HEK293 (cell line): ENCODE measurements at regions of chr5 and their contacts with region 1.

Region 1: DNA sequence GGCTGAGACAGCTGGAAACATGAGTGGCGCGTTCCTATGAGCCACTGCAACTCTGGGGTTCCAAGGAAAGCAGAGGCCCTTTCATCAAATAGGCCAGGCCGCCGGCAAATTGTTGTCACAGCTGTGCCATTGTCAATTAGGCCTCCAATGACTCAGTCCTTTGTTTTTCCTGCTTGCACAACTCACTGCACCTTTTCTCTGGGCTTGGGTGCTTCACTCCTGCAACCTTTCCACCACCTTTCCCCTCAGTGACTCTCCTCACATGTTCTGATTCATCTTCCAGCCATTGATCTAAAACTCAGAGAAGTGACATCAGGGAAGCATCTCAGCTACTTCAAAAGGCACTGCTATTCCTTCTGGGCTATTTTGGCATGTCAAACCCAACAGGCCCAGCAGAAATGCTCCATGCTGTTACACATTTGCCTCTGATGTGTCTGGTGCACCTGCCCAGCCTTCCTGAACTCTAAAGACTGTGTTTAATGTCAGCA is 653.7 kb downstream of the NR2F1-AS1 start:
- H3K4me3 ChIP-seq: no peak overlapping the region
- H3K27ac ChIP-seq: no peak overlapping the region
- H3K4me1 ChIP-seq: no peaks in the 10 kb centered on the region
- CTCF ChIP-seq: no peak

Region 2: GRCh38 chr5:92588876-92589275 is 338.5 kb before region 1 on chr5:
- CTCF ChIA-PET with region 1: no interaction called
- POLR2A ChIA-PET with region 1: no interaction called
- H3K4me3 ChIP-seq: no peak overlapping the region
- H3K27ac ChIP-seq: no peak overlapping the region
- H3K4me1 ChIP-seq: no peaks in the 10 kb centered on the region; the same call in 1 of the 2 replicates
- CTCF ChIP-seq: no peak

Region 3: DNA sequence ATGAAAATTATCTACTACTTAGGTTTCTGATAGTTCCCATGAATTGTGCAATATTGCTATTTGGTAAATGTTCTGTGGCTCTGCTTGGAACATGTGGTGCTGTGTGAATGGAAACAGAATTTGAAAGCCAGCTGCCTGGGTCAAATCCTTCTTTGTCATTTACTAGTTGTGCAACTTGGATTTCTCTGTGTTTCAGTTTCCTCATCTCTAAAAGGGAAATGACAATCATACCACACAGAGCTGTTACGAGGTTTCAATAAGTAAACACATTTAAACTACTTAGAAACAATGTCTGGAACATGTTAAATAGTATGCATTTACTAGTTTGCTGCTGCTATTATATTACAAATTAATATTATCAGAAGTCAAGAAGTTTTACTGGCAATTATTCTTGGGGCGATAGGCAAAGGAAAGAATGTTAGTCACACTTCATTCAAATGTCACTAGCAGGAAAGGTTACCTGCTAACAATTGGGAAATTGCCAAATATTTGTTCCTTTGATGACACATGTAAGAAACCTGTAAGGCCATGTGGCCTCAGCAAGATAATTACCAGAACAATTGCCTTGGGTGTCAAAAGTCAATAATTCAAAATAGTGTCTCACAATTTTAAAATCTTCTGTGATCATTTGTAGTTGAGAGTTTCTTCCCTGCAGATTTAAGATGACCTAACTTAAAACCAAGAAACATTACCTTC is 1506.3 kb after region 1 on chr5:
- CTCF ChIA-PET with region 1: interaction called, 11 read pairs
- POLR2A ChIA-PET with region 1: no interaction called
- H3K4me3 ChIP-seq: no peak overlapping the region
- H3K27ac ChIP-seq: no peak overlapping the region
- H3K4me1 ChIP-seq: 0 out of 2 replicates have a peak, but pooled peaks cover 2% of the 10 kb centered on the region
- CTCF ChIP-seq: no peak